ENCODE measurements at regions of chr18 and their contacts with region 1.

Region 1: DNA sequence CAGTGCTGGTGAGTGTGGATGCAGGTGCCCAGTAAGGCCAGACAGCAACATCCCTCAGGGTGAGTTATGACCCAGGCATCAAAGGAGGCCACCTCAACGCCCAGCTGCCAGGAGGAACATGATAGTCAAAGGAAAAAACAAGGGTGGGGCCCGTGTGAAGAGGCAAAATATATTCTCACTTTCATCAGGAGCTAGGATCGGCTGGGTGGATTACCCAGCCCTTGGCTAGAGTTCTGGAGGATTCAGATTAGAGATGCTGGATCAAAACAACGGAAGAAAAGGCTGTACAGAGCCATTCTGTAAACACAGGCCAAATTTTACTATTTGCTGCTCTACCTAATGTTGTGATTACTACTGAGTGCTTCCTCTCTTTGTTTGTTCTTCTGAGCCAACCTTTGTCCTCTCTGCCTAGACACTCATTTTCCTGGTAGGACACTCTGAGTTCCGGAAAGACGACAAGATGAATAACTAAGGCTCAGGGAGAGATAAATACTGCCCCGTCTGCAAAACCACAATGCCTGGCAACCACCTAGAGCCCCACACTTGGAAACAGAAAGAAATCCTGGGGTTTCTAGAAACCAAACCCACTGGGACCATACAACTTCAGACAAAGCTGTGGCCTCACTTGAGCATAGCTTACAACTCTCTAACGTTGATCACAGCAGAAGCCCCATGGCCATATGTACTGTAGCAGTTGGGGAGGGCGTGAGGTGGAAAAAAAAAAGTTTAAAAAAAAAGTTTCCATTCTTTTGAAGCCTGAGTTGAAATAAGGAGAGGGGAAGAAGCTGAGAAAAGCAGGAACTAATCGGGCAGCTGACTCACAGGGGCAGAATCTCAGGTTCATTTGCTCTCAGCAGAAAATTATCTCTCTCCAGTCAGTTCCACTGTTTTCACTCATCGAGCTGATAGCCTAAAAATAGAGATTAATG is 17.8 kb upstream of the PMAIP1 start:
- DNase-seq: peak; percentile 28
- H3K4me3 Mint-ChIP-seq: no peak overlapping the region
- H3K27ac Mint-ChIP-seq: peak overlapping the region; percentile 48
- H3K4me1 Mint-ChIP-seq: peaks cover 43% of the 10 kb centered on the region
- H3K27me3 Mint-ChIP-seq: no peaks in the 10 kb centered on the region

Region 2: DNA sequence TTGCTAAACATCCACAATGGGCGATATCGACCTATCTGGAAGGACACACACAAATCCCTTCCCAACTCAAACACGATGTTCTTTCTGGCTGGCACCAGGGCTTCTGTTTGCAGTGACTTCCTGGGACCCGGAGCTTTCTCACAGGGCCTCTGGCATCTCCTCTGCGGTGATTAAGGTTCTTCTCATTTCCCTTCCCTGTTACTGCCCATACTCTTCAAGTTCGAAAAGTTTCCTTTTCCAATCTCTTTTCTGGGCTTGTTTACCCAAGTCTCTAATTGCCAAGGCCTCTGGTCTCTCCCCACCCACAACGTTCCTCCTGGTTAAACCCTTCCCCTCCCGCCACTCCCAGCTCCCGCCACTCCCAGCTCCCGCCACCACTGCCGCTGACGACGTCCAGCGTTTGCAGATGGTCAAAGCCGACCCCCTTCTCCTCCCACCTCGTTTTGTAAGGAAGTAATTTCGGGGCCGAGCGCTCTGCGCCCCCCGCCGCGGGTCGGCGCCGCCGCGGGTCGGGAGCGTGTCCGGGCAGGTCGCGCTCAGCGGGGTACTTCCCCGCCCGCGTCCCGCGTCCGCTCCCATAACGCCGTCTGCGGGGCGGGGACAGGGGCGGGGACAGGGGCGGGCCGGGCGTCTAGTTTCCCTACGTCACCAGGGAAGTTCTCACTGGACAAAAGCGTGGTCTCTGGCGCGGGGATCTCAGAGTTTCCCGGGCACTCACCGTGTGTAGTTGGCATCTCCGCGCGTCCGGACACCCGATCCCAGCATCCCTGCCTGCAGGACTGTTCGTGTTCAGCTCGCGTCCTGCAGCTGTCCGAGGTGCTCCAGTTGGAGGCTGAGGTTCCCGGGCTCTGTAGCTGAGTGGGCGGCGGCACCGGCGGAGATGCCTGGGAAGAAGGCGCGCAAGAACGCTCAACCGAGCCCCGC is 17.6 kb after region 1 on chr18 and contains the start of gene PMAIP1:
- CTCF ChIA-PET with region 1: interaction called, 3 read pairs
- POLR2A ChIA-PET with region 1: interaction called, 11 read pairs
- DNase-seq: peak; percentile 79
- H3K4me3 Mint-ChIP-seq: peak within 1 kb of the TSS; percentile 99
- H3K27ac Mint-ChIP-seq: peak within 1 kb of the TSS; percentile 99
- H3K4me1 Mint-ChIP-seq: peaks cover 54% of the 10 kb centered on the region
- H3K27me3 Mint-ChIP-seq: no peaks in the 10 kb centered on the region
- total RNA-seq, gene PMAIP1: 14.8 to 19.1 TPM